ENCODE measurements at regions of chr3 and their contacts with region 1.

Region 1: GRCh38 chr3:127652231-127652995 is 20.3 kb upstream of the ABTB1 start:
- DNase-seq: peak in 3 of 5 donors; percentile 55 to 61 (median 60)
- ATAC-seq: peak; percentile 64 to 89 (median 88)
- H3K4me3 ChIP-seq: peak overlapping the region in 1 of 12 donors; percentile 19
- H3K27ac ChIP-seq: no peak overlapping the region
- H3K4me1 ChIP-seq: peaks cover 0 to 12% (median 4%) of the 10 kb centered on the region in 12 donors
- H3K27me3 ChIP-seq: no peaks in the 10 kb centered on the region
- CTCF ChIP-seq: peak; percentile 83 to 96 (median 92)
- POLR2A ChIP-seq: no peak

Region 2: GRCh38 chr3:127512256-127512655 is 140.2 kb before region 1 on chr3:
- intact Hi-C with region 1: no loop called
- DNase-seq: no peak
- ATAC-seq: no peak
- H3K4me3 ChIP-seq: no peak overlapping the region
- H3K27ac ChIP-seq: no peak overlapping the region
- H3K4me1 ChIP-seq: no peaks in the 10 kb centered on the region
- H3K27me3 ChIP-seq: peaks cover 0 to 13% (median 0%) of the 10 kb centered on the region in 9 donors
- CTCF ChIP-seq: no peak
- POLR2A ChIP-seq: no peak

Region 3: DNA sequence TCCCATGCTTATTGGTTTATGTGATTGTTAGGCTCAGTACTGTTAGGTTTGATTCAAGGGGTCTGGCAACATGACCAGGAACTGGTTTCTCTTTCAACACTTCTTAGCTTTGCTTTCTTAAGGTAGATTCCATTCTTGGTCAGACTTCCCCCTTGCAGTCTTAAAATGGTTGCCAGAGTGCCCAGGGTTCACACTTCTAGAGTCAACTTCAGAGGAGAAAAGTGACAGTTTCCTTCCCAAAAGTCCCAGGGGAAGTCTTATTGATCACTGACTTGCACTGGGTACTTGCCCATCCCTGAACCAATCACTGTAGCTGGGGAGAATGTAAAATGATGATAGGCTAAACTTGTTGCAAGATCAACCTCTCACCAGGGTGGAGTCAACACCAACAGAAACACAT is 155.8 kb after region 1 on chr3:
- intact Hi-C with region 1: no loop called
- DNase-seq: no peak
- ATAC-seq: no peak
- H3K4me3 ChIP-seq: no peak overlapping the region
- H3K27ac ChIP-seq: no peak overlapping the region
- H3K4me1 ChIP-seq: peaks cover 0 to 50% (median 18%) of the 10 kb centered on the region in 12 donors
- H3K27me3 ChIP-seq: no peaks in the 10 kb centered on the region
- CTCF ChIP-seq: no peak
- POLR2A ChIP-seq: no peak

Region 4: GRCh38 chr3:127831723-127832172 is 179.3 kb after region 1 on chr3:
- intact Hi-C with region 1: loop called in 9 of 10 experiments (anchors 1 to 5 kb)
- DNase-seq: peak in 4 of 5 donors; percentile 52 to 79 (median 58)
- ATAC-seq: peak in 3 of 4 donors; percentile 59 to 78 (median 63)
- H3K4me3 ChIP-seq: no peak overlapping the region
- H3K27ac ChIP-seq: no peak overlapping the region
- H3K4me1 ChIP-seq: no peaks in the 10 kb centered on the region
- H3K27me3 ChIP-seq: no peaks in the 10 kb centered on the region
- CTCF ChIP-seq: peak; percentile 64 to 81 (median 72)
- POLR2A ChIP-seq: no peak

Region 5: DNA sequence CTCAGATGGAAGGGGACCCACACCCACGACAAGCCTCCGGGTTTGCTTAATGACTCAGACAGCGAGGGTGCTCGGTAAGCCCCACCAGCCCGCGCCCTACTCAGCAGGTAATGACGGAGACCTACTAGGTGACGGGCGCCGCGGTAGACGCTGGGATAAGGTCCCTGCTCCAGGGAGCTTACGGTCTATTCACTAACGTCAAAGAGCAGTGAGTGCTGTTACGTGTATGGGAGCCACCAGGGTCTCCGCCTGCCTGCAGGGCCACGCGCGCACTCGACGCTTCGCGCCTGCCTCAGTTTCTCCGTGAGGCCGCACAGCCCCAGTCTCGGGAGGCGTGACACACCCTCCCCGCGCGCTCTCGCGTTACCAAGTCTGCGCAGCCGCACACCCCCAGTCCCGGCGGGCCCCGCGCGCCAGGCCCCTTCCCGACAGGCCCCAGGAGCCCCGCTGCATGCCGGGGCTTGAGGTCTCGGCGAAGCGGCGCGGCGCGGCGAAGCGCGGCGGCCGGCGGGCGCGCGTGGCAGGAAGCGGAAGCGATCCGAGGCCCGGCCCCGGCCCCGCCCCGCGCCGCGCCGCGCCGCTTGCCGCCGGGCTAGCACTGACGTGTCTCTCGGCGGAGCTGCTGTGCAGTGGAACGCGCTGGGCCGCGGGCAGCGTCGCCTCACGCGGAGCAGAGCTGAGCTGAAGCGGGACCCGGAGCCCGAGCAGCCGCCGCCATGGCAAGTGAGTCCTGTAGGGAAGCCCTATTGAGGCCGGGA is 399.6 kb after region 1 on chr3 and contains the start of gene SEC61A1:
- intact Hi-C with region 1: loop called in 2 of 10 experiments (anchors 10 kb)
- DNase-seq: peak; percentile 95 to 98 (median 96)
- ATAC-seq: peak; percentile 95 to 98 (median 98)
- H3K4me3 ChIP-seq: peak within 1 kb of the TSS; percentile 72 to 99 (median 96)
- H3K27ac ChIP-seq: peak within 1 kb of the TSS; percentile 77 to 98 (median 94)
- H3K4me1 ChIP-seq: peaks cover 10 to 46% (median 37%) of the 10 kb centered on the region in 12 donors
- H3K27me3 ChIP-seq: no peaks in the 10 kb centered on the region
- CTCF ChIP-seq: no peak
- POLR2A ChIP-seq: peak; percentile 61 to 77
- total RNA-seq, gene SEC61A1: 52.7 to 116 (median 78.2) TPM

Region 6: GRCh38 chr3:128113817-128114794 is 461.7 kb after region 1 on chr3:
- intact Hi-C with region 1: no loop called
- DNase-seq: peak in 1 of 5 donors; percentile 47
- ATAC-seq: peak in 3 of 4 donors; percentile 76 to 79 (median 77)
- H3K4me3 ChIP-seq: no peak overlapping the region
- H3K27ac ChIP-seq: peak overlapping the region in 8 of 12 donors; percentile 1 to 56 (median 32)
- H3K4me1 ChIP-seq: peaks cover 0 to 20% (median 2%) of the 10 kb centered on the region in 12 donors
- H3K27me3 ChIP-seq: no peaks in the 10 kb centered on the region
- CTCF ChIP-seq: no peak
- POLR2A ChIP-seq: no peak

Region 7: DNA sequence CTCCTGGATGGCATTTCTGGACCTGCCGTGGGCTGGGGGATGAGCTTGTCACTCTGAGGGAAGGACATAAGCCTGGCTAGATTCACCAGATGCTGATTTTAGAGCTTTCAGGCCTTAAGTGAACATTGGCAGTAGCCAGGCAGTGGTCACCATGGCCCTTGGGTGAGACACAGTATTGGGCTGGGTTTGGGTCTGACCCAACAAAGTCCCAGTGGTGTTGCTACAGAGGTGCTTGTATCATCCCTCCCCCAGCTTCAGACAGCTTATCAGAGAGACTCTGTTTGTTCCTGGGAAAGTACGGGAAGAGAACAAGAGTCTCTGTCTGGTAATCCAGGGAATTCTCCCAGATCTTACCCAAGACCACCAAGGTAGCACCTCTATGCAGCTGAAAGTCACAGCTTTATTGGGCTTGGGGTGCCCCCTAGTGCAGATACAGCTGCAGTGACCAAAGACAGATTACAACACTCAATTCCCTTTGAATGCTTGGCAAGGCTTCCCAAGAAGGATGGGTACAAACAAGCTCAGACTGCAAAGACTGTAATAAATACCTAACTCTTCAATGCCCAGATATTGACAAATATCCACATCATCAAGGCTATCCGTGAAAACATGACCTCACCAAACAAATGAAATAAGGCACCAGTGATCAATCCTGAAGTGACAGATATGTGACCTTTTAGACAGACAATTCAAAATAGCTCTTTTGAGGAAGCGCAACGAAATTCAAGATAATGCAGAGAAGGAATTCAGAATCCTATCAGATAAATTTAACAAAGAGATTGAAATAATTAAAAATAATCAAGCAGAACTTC is 481.1 kb after region 1 on chr3:
- intact Hi-C with region 1: loop called in 2 of 10 experiments (anchors 5 kb)
- DNase-seq: no peak
- ATAC-seq: peak; percentile 26 to 75 (median 68)
- H3K4me3 ChIP-seq: no peak overlapping the region
- H3K27ac ChIP-seq: no peak overlapping the region
- H3K4me1 ChIP-seq: no peaks in the 10 kb centered on the region
- H3K27me3 ChIP-seq: no peaks in the 10 kb centered on the region
- CTCF ChIP-seq: peak; percentile 35 to 64 (median 58)
- POLR2A ChIP-seq: no peak

Measured in heart left ventricle (tissue), 16 donors.